ENCODE measurements at regions of chr1 and their contacts with region 1.

Region 1: GRCh38 chr1:203117611-203118575 is 9.6 kb upstream of the ADORA1 start:
- DNase-seq: peak; percentile 21
- H3K4me3 ChIP-seq: no peak overlapping the region
- H3K27ac ChIP-seq: no peak overlapping the region
- H3K27me3 ChIP-seq: peaks cover 50% of the 10 kb centered on the region
- CTCF ChIP-seq: peak; percentile 85

Region 2: GRCh38 chr1:203038891-203039608 is 78.8 kb before region 1 on chr1:
- CTCF ChIA-PET with region 1: interaction called, 34 read pairs
- POLR2A ChIA-PET with region 1: no interaction called
- DNase-seq: peak; percentile 29
- H3K4me3 ChIP-seq: no peak overlapping the region
- H3K27ac ChIP-seq: no peak overlapping the region
- H3K27me3 ChIP-seq: peaks cover 4% of the 10 kb centered on the region
- CTCF ChIP-seq: peak; percentile 94

Region 3: GRCh38 chr1:203133970-203134725 is 16.3 kb after region 1 on chr1:
- CTCF ChIA-PET with region 1: interaction called, 24 read pairs
- POLR2A ChIA-PET with region 1: no interaction called
- DNase-seq: no peak
- H3K4me3 ChIP-seq: no peak overlapping the region
- H3K27ac ChIP-seq: no peak overlapping the region
- H3K27me3 ChIP-seq: peaks cover 33% of the 10 kb centered on the region
- CTCF ChIP-seq: no peak

Region 4: DNA sequence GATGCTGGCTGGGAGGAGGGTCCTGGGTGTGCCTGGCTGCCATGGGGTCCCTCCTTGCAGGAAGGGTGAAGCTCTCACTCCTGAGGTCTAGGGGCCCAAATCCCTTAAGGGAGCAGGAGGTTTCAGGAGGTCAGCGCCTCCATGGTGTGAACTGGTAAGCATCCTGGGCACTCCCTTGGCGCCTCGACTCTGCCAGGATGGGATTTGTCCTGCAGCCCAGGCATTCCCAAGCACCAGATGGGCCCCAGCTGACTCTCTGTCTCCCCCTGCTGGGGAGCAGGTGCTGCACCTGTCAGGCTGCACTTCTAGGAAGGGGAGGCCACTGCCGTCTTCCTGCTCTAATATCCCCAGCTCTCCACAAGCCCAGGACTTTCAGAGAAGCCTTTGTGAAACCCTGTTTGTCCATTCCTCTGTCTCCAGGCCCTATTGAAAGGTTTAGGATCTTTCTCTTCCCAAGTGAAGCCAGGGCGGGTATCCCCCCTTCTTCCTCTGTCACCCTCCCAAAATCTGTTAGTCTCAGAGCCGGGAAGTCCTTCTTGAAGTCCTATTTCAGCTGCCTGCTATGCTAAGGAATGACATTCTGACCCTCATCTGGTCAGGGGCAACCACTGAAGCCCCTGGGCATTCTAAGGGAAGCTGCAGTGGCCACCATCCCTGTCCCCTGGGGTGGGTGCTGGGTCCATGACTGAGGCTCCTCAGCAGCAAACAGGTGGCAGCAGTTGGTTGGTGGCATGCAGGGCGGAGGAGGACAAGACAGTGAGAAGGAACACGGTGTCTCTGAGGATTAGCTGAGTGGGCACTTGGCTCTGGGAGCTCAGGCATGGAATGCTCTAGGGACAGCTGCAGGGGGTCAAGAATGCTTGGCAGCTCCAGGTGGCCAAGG is 54.5 kb after region 1 on chr1:
- CTCF ChIA-PET with region 1: interaction called, 35 read pairs
- POLR2A ChIA-PET with region 1: no interaction called
- DNase-seq: peak; percentile 21
- H3K4me3 ChIP-seq: no peak overlapping the region
- H3K27ac ChIP-seq: no peak overlapping the region
- H3K27me3 ChIP-seq: peaks cover 8% of the 10 kb centered on the region
- CTCF ChIP-seq: peak; percentile 81

Region 5: DNA sequence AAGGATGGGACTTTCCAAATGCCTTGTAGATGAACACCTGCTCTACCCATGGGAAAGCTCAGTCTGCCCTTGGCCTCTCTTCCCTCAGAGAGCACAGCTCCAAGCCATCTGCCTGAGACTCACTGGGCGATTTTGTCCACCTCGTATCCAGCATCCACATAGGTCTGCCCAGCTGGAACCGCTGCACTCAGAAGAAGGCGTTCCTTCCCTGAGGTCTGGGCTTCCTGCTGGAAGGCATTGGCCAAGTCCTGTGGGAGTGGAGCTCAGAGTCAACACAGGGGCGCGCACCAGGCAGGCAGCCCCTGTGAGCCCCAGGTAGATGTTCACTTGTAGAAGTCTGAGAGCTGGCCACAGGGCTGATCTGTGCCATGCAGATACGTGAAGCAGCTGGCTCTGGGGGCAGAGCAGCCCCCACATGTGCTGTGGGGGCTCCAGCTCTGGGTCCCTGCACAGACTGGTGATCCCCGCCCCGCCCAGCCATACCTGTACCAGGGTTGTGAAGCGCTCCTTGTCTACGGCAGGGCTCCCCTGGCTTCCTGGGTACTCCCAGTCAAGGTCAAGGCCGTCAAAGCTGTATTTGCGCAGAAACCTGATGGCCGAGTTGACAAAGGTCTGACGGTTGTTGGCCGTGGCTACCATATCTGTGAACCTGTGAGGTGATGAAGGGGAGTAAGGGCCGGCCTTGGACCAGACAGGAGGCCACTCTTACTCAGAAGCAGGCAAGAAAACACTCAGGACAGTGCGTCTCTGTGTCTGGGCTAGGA is 105.3 kb after region 1 on chr1:
- CTCF ChIA-PET with region 1: interaction called, 253 read pairs
- POLR2A ChIA-PET with region 1: no interaction called
- DNase-seq: no peak
- H3K4me3 ChIP-seq: no peak overlapping the region
- H3K27ac ChIP-seq: no peak overlapping the region
- H3K27me3 ChIP-seq: peaks cover 69% of the 10 kb centered on the region
- CTCF ChIP-seq: no peak

Measured in AG04450 (cell line).